Esophagus squamous epithelium (tissue), 5 donors: ENCODE measurements at regions of chr9 and their contacts with region 1.

Region 1: DNA sequence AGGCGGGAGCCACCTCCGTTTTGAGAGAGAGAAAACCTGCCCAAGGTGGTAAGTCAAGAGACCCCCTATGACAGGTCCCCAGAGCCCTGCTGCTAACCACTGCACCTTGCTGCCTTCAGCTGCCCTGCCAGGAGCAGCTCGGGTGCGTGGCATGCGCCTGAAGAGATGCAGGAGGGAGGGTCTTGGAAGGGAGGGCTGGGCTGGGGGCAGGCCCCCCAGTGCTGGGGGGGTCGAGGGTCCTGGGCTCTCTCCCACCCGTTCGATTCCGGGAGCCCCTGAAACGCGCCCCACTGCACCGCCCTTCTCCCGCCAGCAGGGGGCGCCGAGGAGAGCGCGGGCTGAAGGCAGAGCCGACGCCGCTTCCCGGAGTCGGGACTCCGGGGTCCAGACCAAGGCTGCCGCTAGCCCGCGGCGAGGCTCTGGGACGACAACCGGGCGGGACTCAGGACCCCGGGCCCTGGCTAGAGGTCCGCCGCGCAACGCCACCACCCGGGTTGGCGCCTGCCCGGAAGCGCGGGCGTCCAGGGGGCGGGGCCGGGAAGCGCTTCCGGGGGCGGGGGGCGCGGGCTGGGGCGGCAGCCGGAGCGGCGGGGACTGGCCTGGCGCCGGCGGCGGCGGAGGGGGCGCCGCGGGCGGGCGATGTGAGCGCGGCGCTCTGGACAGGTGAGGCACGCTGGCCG is at the start of gene ZBTB34:
- DNase-seq: no peak
- H3K4me3 ChIP-seq: peak within 1 kb of the TSS; percentile 80 to 94 (median 90)
- H3K27ac ChIP-seq: peak within 1 kb of the TSS; percentile 92 to 98 (median 96)
- H3K4me1 ChIP-seq: peaks cover 13 to 51% (median 21%) of the 10 kb centered on the region in 3 donors
- H3K27me3 ChIP-seq: peaks cover 0 to 9% (median 0%) of the 10 kb centered on the region in 4 donors
- CTCF ChIP-seq: peak; percentile 98 to 100 (median 99)
- POLR2A ChIP-seq: no peak
- total RNA-seq, gene ZBTB34: 4.0 to 8.2 (median 4.5) TPM

Region 2: GRCh38 chr9:126914458-126915280 is 54.5 kb after region 1 on chr9 and contains the start of gene RALGPS1:
- intact Hi-C with region 1: loop called (anchors 10 kb)
- DNase-seq: peak; percentile 71
- H3K4me3 ChIP-seq: peak within 1 kb of the TSS; percentile 48 to 90 (median 70)
- H3K27ac ChIP-seq: peak within 1 kb of the TSS; percentile 81 to 95 (median 90)
- H3K4me1 ChIP-seq: peaks cover 8 to 20% (median 10%) of the 10 kb centered on the region in 3 donors
- H3K27me3 ChIP-seq: no peaks in the 10 kb centered on the region
- CTCF ChIP-seq: no peak
- POLR2A ChIP-seq: peak in 1 of 4 donors; percentile 59
- total RNA-seq, gene RALGPS1: 3.0 to 16.4 (median 10.6) TPM